Pancreas (tissue), 10 donors: ENCODE measurements at regions of chr18 and their contacts with region 1.

Region 1: GRCh38 chr18:1213126-1213525 is 308.5 kb downstream of the ADCYAP1 start:
- DNase-seq: no peak
- ATAC-seq: no peak
- H3K4me3 ChIP-seq: no peak overlapping the region
- H3K27ac ChIP-seq: no peak overlapping the region
- H3K4me1 ChIP-seq: no peaks in the 10 kb centered on the region
- H3K27me3 ChIP-seq: no peaks in the 10 kb centered on the region
- CTCF ChIP-seq: no peak

Region 2: DNA sequence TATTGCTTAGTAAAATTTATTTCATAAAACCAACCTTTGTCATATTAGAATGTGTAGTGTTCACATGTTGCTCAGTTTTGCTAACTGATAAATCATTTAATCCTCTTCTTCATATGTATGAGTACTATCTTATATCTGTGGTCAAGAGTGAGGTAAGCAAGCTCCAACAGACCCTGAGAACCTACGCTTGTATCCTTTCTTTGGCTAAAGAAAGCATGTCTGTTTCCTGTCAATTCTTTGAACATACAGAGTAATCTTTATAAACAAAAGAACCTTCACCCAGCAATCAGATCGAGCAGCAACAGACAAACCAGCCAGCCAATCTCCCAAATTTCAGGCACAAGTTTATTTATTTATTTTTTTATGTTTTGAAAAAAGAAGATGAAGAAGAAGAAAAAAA is 302.1 kb before region 1 on chr18:
- intact Hi-C with region 1: loop called in 1 of 3 experiments (anchors 10 kb)
- DNase-seq: no peak
- ATAC-seq: no peak
- H3K4me3 ChIP-seq: no peak overlapping the region
- H3K27ac ChIP-seq: no peak overlapping the region
- H3K4me1 ChIP-seq: peaks cover 0 to 18% (median 8%) of the 10 kb centered on the region in 3 donors
- H3K27me3 ChIP-seq: peaks cover 0 to 55% (median 13%) of the 10 kb centered on the region in 4 donors
- CTCF ChIP-seq: no peak

Region 3: DNA sequence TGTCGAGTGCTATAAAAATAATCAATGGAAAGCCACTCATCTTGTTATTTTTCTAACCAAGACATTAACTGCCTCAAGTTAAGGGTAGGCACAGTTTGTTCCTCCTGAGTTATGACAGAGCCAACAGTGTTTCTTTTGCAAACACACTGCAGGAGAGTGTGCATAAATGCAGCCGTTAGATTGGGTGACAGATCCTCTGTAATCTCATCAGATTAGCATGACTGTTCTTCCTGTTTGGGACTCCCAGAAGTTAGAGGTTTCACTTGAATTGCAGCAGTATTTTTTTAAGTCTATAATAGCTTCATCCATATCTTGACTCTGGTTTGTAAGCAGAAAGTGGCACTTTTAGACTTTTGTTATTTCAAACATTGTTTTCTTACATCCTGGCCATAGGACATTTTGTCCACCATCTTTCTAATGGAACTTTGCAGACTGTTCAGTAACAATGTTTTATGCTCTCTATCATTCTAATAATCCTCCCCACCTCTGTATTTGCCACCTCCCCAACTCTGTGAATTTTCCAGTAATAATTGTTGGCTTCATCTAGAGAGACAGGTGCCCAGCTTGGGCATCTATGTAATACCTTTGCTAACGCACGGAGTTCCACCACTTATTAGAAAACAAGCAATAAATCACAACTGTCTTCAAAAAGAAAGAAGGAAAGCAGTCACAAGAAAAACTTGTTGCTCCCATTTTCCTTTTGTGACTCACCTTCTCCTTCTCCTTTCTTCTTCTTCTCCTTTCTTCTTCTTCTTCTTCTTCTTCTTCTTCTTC is 251.5 kb after region 1 on chr18:
- intact Hi-C with region 1: no loop called
- DNase-seq: no peak
- ATAC-seq: no peak
- H3K4me3 ChIP-seq: no peak overlapping the region
- H3K27ac ChIP-seq: no peak overlapping the region
- H3K4me1 ChIP-seq: no peaks in the 10 kb centered on the region
- H3K27me3 ChIP-seq: no peaks in the 10 kb centered on the region
- CTCF ChIP-seq: no peak

Region 4: GRCh38 chr18:1779587-1779986 is 566.5 kb after region 1 on chr18:
- intact Hi-C with region 1: no loop called
- DNase-seq: no peak
- ATAC-seq: no peak
- H3K4me3 ChIP-seq: no peak overlapping the region
- H3K27ac ChIP-seq: no peak overlapping the region
- H3K4me1 ChIP-seq: no peaks in the 10 kb centered on the region
- H3K27me3 ChIP-seq: no peaks in the 10 kb centered on the region
- CTCF ChIP-seq: no peak